T-cell (primary cell): ENCODE measurements at regions of chr15 and their contacts with region 1.

Region 1: DNA sequence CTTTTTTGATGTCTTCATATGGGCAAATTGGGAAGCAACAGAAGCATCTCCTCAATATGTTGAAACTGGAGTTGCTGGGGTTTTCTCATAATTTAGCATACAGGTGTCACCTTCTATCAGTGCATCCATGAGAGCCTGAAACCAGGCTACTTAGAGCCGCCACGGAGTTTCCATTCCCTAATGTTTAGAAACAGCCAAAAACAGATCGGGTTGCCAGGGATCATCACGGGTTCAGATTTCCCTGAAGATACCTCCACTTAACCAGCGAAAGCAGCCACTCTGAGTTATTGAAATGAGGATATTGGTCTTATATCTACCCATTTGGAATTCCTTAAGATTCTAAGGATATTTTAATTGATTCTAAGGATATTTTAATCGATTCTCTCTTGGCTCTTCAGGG is 14.5 kb downstream of the TERB2 start:
- DNase-seq: no peak
- ATAC-seq: no peak
- H3K4me3 ChIP-seq: no peak overlapping the region
- H3K4me3 Mint-ChIP-seq: no peak overlapping the region
- H3K27ac ChIP-seq: no peak overlapping the region
- H3K27ac Mint-ChIP-seq: no peak overlapping the region
- H3K4me1 ChIP-seq: no peaks in the 10 kb centered on the region
- H3K4me1 Mint-ChIP-seq: no peaks in the 10 kb centered on the region
- H3K27me3 ChIP-seq: peaks cover 0 to 2% of the 10 kb centered on the region in 2 experiments
- H3K27me3 Mint-ChIP-seq: peaks cover 0 to 3% of the 10 kb centered on the region in 2 donors

Region 2: DNA sequence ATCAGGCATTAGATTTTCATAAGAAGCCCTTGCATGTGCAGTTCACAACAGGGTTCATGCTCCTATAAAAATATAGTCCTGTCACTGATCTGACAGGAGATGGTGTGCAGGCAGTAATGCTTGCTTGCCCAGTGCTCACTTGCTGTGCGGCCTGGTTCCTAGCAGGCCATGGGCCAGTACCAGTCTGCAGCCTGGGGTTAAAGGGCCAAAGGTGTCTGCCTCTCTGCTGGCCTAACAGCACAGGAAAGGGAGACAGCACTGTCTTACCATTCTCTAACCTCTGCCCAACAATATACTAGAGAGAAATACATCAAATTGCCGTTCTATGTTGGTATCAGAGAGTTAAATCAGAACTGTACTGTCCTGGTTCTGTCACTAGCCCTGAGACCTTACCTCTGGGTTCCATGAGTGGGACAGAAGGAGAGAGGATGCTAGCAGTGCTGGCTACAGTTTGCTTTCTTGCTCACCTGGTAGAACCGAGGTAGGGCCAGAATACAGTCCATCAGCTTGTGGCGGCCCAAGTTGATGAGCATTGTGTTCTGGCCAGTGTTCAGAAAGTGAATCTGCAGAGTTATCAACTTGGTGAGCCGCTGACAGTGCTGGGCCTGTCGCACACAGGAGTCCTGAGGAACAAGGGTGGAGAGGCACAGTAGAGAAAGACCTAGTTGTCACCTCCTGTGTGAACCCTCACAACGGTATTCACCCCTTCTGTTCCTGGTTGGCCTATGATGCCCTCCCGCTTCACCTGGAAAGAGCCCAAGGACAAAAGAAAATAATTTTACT is 405.5 kb before region 1 on chr15:
- CTCF ChIA-PET with region 1: no interaction called
- POLR2A ChIA-PET with region 1: no interaction called
- DNase-seq: no peak
- ATAC-seq: no peak
- H3K4me3 ChIP-seq: no peak overlapping the region
- H3K4me3 Mint-ChIP-seq: no peak overlapping the region
- H3K27ac ChIP-seq: no peak overlapping the region
- H3K27ac Mint-ChIP-seq: peak overlapping the region in 1 of 2 donors; percentile 4
- H3K4me1 ChIP-seq: peaks cover 2 to 6% of the 10 kb centered on the region in 2 experiments
- H3K4me1 Mint-ChIP-seq: peaks cover 12 to 13% (median 12%) of the 10 kb centered on the region in 3 donors
- H3K27me3 ChIP-seq: no peaks in the 10 kb centered on the region
- H3K27me3 Mint-ChIP-seq: no peaks in the 10 kb centered on the region

Region 3: DNA sequence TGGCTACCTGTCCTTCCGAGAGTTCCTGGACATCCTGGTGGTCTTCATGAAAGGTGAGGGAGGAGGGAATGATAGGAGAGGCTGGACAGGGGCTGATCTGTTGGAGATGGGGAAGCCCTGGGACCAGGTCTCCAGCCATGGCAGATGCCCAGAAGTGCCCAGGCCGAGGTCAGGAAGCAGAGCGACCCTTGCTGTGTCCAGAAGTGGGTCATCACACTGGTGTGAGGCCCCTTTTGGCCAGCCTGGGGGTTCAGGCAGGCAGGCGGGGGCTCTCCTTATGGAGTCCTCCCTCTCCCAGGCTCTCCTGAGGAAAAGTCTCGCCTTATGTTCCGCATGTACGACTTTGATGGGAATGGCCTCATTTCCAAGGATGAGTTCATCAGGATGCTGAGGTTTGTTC is 176.6 kb after region 1 on chr15:
- CTCF ChIA-PET with region 1: interaction called in 1 of 2 experiments, 17 read pairs
- POLR2A ChIA-PET with region 1: no interaction called
- DNase-seq: no peak
- ATAC-seq: no peak
- H3K4me3 ChIP-seq: no peak overlapping the region
- H3K4me3 Mint-ChIP-seq: no peak overlapping the region
- H3K27ac ChIP-seq: no peak overlapping the region
- H3K27ac Mint-ChIP-seq: no peak overlapping the region
- H3K4me1 ChIP-seq: no peaks in the 10 kb centered on the region
- H3K4me1 Mint-ChIP-seq: no peaks in the 10 kb centered on the region
- H3K27me3 ChIP-seq: peaks cover 0 to 6% of the 10 kb centered on the region in 2 experiments
- H3K27me3 Mint-ChIP-seq: no peaks in the 10 kb centered on the region